Naive thymus-derived CD4-positive, alpha-beta T cell (primary cell): ENCODE measurements at regions of chr1 and their contacts with region 1.

Region 1: GRCh38 chr1:77281491-77282186 is at the start of gene AK5:
- DNase-seq: peak; percentile 32 to 60 (median 53)
- ATAC-seq: peak; percentile 76
- H3K4me3 ChIP-seq: peak within 1 kb of the TSS; percentile 74
- H3K4me3 Mint-ChIP-seq: peak within 1 kb of the TSS; percentile 75 to 95 (median 92)
- H3K27ac ChIP-seq: peak within 1 kb of the TSS; percentile 67
- H3K27ac Mint-ChIP-seq: peak within 1 kb of the TSS in 8 of 9 donors; percentile 76 to 95 (median 84)
- H3K4me1 ChIP-seq: peaks cover 0 to 31% of the 10 kb centered on the region in 2 donors
- H3K4me1 Mint-ChIP-seq: peaks cover 29 to 72% (median 59%) of the 10 kb centered on the region in 7 donors
- H3K27me3 ChIP-seq: no peaks in the 10 kb centered on the region
- H3K27me3 Mint-ChIP-seq: peaks cover 0 to 46% (median 0%) of the 10 kb centered on the region in 5 donors
- total RNA-seq, gene AK5: 1.7 to 59.4 (median 41.0) TPM

Region 2: GRCh38 chr1:77303387-77303786 is 21.7 kb after region 1 on chr1:
- CTCF ChIA-PET with region 1: no interaction called
- POLR2A ChIA-PET with region 1: interaction called, 44 read pairs
- intact Hi-C with region 1: no loop called
- DNase-seq: peak in 3 of 9 donors; percentile 18 to 38 (median 31)
- ATAC-seq: no peak
- H3K4me3 ChIP-seq: no peak overlapping the region
- H3K4me3 Mint-ChIP-seq: peak overlapping the region in 7 of 10 donors; percentile 30 to 79 (median 61)
- H3K27ac ChIP-seq: no peak overlapping the region
- H3K27ac Mint-ChIP-seq: peak overlapping the region in 8 of 9 donors; percentile 43 to 96 (median 78)
- H3K4me1 ChIP-seq: peaks cover 1 to 19% of the 10 kb centered on the region in 2 donors
- H3K4me1 Mint-ChIP-seq: peaks cover 3 to 82% (median 65%) of the 10 kb centered on the region in 7 donors
- H3K27me3 ChIP-seq: no peaks in the 10 kb centered on the region
- H3K27me3 Mint-ChIP-seq: no peaks in the 10 kb centered on the region

Region 3: DNA sequence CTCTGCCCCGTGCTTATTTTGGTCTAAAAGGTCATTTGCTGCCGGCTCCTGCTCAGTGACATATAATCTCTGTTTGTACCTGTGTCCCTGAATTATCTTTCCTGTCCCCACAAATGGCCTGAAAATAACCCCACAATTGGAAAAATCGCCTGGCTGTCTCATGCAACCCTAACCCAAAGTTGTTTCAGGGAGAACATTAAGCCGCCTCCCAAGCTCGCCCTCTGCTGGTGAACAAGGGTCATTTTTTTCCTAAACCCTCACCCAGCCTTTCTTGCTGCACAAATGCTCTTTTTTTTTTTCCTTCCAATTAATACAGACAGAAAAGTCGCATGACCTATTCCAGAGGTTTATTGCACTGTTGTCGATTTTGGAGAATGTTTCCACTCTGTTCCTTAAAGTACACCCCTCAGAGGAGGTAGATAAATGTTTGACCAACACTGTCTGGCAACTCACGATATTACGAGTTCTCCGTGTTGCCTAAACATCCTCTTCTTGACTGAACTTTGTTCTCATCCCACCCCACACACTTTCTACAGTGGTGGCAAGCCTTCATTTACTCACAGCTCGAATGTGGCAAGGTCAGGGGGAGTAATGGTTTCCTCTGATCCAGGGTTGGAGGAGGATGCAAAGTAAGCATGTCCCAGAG is 252.1 kb after region 1 on chr1:
- CTCF ChIA-PET with region 1: interaction called, 3 read pairs
- POLR2A ChIA-PET with region 1: no interaction called
- intact Hi-C with region 1: loop called (anchors 1 to 10 kb)
- DNase-seq: peak; percentile 34 to 75 (median 60)
- ATAC-seq: peak; percentile 71
- H3K4me3 ChIP-seq: no peak overlapping the region
- H3K4me3 Mint-ChIP-seq: peak overlapping the region in 6 of 10 donors; percentile 22 to 69 (median 50)
- H3K27ac ChIP-seq: no peak overlapping the region
- H3K27ac Mint-ChIP-seq: peak overlapping the region in 8 of 9 donors; percentile 16 to 94 (median 38)
- H3K4me1 ChIP-seq: peaks cover 0 to 4% of the 10 kb centered on the region in 2 donors
- H3K4me1 Mint-ChIP-seq: peaks cover 2 to 16% (median 10%) of the 10 kb centered on the region in 7 donors
- H3K27me3 ChIP-seq: no peaks in the 10 kb centered on the region
- H3K27me3 Mint-ChIP-seq: no peaks in the 10 kb centered on the region